Activated T-helper 1 cell treated with anti-CD3 and anti-CD28 coated beads, Interleukin-12 subunit alpha, Interleukin-12 subunit beta, Interleukin-2, Interleukin-4 antibody, amounts not matched to agents 30 ng/mL and 10 ng/mL and 1 ng/mL, durations not matched to agents 14 hours and 24 hours and 36 hours (primary cell): ENCODE measurements at regions of chr14 and their contacts with region 1.

Region 1: DNA sequence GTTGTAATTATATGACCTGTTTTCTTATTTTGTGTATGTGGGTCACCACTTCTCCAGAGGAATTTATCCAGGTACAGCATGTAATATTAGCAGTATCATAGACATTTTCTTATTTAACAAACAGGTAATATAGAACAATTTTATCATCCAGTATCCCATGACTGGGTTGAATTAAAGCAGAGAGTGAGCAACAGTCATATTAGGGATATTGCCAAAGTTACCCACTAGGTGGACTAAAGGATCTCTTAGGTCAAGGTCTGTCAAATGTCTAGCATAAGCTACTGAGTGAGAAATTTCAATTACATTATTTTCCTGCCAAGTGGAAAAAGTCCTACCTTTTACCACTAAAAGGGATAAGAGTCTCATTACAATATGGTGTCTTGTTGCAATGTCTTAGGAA is 62.1 kb upstream of the TRIM9 start:
- DNase-seq: no peak
- H3K4me3 Mint-ChIP-seq: no peak overlapping the region
- H3K27ac Mint-ChIP-seq: no peak overlapping the region
- H3K4me1 Mint-ChIP-seq: no peaks in the 10 kb centered on the region
- H3K27me3 Mint-ChIP-seq: no peaks in the 10 kb centered on the region

Region 2: GRCh38 chr14:51219473-51220448 is 62.7 kb after region 1 on chr14:
- intact Hi-C with region 1: loop called (anchors 1 kb)
- DNase-seq: no peak
- H3K4me3 Mint-ChIP-seq: no peak overlapping the region
- H3K27ac Mint-ChIP-seq: no peak overlapping the region
- H3K4me1 Mint-ChIP-seq: no peaks in the 10 kb centered on the region
- H3K27me3 Mint-ChIP-seq: no peaks in the 10 kb centered on the region